Right ventricle myocardium inferior (tissue), 1 donor: ENCODE measurements at regions of chr4 and their contacts with region 1.

Region 1: GRCh38 chr4:104616401-104616820 is 121.7 kb upstream of the CXXC4 start:
- DNase-seq: peak; percentile 72
- ATAC-seq: peak; percentile 94

Region 2: DNA sequence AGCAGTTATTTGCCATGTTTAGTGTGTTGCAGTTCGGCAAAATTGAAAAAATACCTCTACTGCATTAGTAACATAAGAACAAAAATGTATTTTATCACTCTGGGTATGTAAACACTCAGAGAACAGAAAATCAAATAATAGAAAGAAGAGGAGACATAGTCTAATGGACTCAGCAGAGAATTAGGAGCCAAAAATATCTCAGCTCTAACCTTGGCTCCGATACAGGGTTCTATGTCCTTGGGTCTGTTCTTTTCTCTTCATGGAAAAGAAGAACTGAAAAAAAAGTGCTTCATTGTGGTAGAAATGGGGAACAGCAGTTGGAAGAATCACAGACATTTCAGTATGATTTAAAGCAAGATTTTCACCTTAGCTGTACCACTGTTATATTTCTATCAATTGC is 118.8 kb after region 1 on chr4:
- intact Hi-C with region 1: loop called (anchors 10 kb)
- DNase-seq: no peak
- ATAC-seq: peak; percentile 48

Region 3: GRCh38 chr4:105225500-105225899 is 609.1 kb after region 1 on chr4:
- intact Hi-C with region 1: no loop called
- DNase-seq: no peak
- ATAC-seq: no peak